GM12878 (cell line): ENCODE measurements at regions of chr3 and their contacts with region 1.

Region 1: GRCh38 chr3:16370872-16371740 is 106.1 kb downstream of the OXNAD1 start:
- DNase-seq: no peak
- ATAC-seq: peak; percentile 41
- H3K4me3 ChIP-seq: peak overlapping the region; percentile 23; the same call in 1 of the 2 replicates
- H3K27ac ChIP-seq: peak overlapping the region; percentile 96
- H3K4me1 ChIP-seq: peaks cover 62% of the 10 kb centered on the region
- H3K27me3 ChIP-seq: no peaks in the 10 kb centered on the region
- CTCF ChIP-seq: no peak
- EP300 ChIP-seq: peak in 1 of 2 experiments; percentile 67; a peak in 3 of 4 replicates
- POLR2A ChIP-seq: no peak
- RAD21 ChIP-seq: no peak

Region 2: GRCh38 chr3:16427103-16427965 is 56.2 kb after region 1 on chr3:
- CTCF ChIA-PET with region 1: interaction called, 8 read pairs
- POLR2A ChIA-PET with region 1: interaction called, 9 read pairs
- RAD21 ChIA-PET with region 1: interaction called, 11 read pairs
- SMC1A ChIA-PET with region 1: interaction called, 19 read pairs
- in situ Hi-C with region 1: no loop called
- intact Hi-C with region 1: loop called (anchors 2 kb)
- DNase-seq: no peak
- ATAC-seq: no peak
- H3K4me3 ChIP-seq: no peak overlapping the region
- H3K27ac ChIP-seq: no peak overlapping the region
- H3K4me1 ChIP-seq: peaks cover 28% of the 10 kb centered on the region
- H3K27me3 ChIP-seq: no peaks in the 10 kb centered on the region
- CTCF ChIP-seq: no peak
- EP300 ChIP-seq: no peak
- POLR2A ChIP-seq: no peak
- RAD21 ChIP-seq: no peak

Region 3: DNA sequence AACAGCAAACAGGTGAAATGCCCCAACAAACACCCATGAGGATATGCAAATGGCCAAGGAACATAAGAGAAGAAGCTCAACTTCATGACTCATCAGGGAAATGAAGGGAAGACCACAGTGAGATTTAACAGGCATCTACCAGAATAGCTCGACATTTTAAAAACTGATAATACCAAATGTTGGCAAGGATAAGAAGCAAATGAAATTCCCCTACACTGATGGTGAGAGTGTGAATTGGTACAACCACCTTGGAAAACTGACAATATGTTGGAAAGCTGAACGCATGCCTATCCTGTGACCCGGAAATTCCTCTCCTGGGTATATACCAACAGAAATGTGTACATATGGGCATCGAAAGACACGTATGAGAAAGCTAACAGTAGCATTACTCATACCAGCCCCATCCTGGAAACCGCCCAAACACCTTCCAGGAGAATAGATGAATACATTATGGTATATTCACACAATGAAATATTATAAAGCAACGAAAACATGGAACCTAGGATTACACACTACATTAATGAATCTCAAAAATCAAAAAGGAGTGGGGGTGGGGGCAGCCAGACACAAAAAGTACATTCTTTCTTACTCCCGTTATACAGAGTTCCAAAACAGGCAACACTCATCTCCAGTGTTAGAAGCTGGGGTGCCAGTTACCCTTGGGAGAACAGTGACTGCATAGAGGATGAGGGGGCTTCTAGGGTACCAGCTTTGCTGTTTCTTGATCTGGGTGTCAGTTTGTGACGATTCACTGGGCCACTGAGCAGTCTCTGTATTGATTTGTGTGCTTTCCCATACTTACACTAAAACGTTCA is 125.5 kb after region 1 on chr3:
- CTCF ChIA-PET with region 1: interaction called, 3 read pairs
- POLR2A ChIA-PET with region 1: interaction called, 6 read pairs
- RAD21 ChIA-PET with region 1: interaction called, 17 read pairs
- SMC1A ChIA-PET with region 1: interaction called, 10 read pairs
- in situ Hi-C with region 1: no loop called
- intact Hi-C with region 1: no loop called
- DNase-seq: peak; percentile 60
- ATAC-seq: peak; percentile 73
- H3K4me3 ChIP-seq: no peak overlapping the region
- H3K27ac ChIP-seq: peak overlapping the region; percentile 29; the same call in 1 of the 2 replicates
- H3K4me1 ChIP-seq: peaks cover 48% of the 10 kb centered on the region
- H3K27me3 ChIP-seq: no peaks in the 10 kb centered on the region
- CTCF ChIP-seq: no peak
- EP300 ChIP-seq: no peak
- POLR2A ChIP-seq: no peak
- RAD21 ChIP-seq: no peak

Region 4: GRCh38 chr3:16504242-16504641 is 133.1 kb after region 1 on chr3:
- CTCF ChIA-PET with region 1: interaction called, 4 read pairs
- POLR2A ChIA-PET with region 1: interaction called, 66 read pairs
- RAD21 ChIA-PET with region 1: interaction called, 52 read pairs
- SMC1A ChIA-PET with region 1: interaction called, 125 read pairs
- in situ Hi-C with region 1: no loop called
- intact Hi-C with region 1: no loop called
- DNase-seq: peak; percentile 96
- ATAC-seq: peak; percentile 73
- H3K4me3 ChIP-seq: no peak overlapping the region
- H3K27ac ChIP-seq: peak overlapping the region; percentile 60
- H3K4me1 ChIP-seq: peaks cover 61% of the 10 kb centered on the region
- H3K27me3 ChIP-seq: no peaks in the 10 kb centered on the region
- CTCF ChIP-seq: no peak
- EP300 ChIP-seq: peak; percentile 91 to 92
- POLR2A ChIP-seq: no peak
- RAD21 ChIP-seq: no peak

Region 5: GRCh38 chr3:16529264-16529663 is 158.2 kb after region 1 on chr3:
- CTCF ChIA-PET with region 1: interaction called, 3 read pairs
- POLR2A ChIA-PET with region 1: no interaction called
- RAD21 ChIA-PET with region 1: no interaction called
- SMC1A ChIA-PET with region 1: interaction called, 12 read pairs
- in situ Hi-C with region 1: no loop called
- intact Hi-C with region 1: no loop called
- DNase-seq: no peak
- ATAC-seq: peak; percentile 72
- H3K4me3 ChIP-seq: no peak overlapping the region
- H3K27ac ChIP-seq: no peak overlapping the region
- H3K4me1 ChIP-seq: no peaks in the 10 kb centered on the region
- H3K27me3 ChIP-seq: no peaks in the 10 kb centered on the region
- CTCF ChIP-seq: peak in 2 of 3 experiments; percentile 22 to 24; a peak in 3 of 6 replicates
- EP300 ChIP-seq: no peak
- POLR2A ChIP-seq: no peak
- RAD21 ChIP-seq: peak; percentile 49

Region 6: GRCh38 chr3:16550676-16551341 is 179.7 kb after region 1 on chr3:
- CTCF ChIA-PET with region 1: interaction called, 7 read pairs
- POLR2A ChIA-PET with region 1: no interaction called
- RAD21 ChIA-PET with region 1: interaction called, 5 read pairs
- SMC1A ChIA-PET with region 1: interaction called, 5 read pairs
- in situ Hi-C with region 1: no loop called
- intact Hi-C with region 1: loop called (anchors 1 kb)
- DNase-seq: peak; percentile 81
- ATAC-seq: peak; percentile 98
- H3K4me3 ChIP-seq: no peak overlapping the region
- H3K27ac ChIP-seq: 0 out of 2 replicates have a peak overlapping the region, but pooled peaks have one; percentile 9
- H3K4me1 ChIP-seq: peaks cover 13% of the 10 kb centered on the region
- H3K27me3 ChIP-seq: no peaks in the 10 kb centered on the region
- CTCF ChIP-seq: peak; percentile 83 to 94 (median 90)
- EP300 ChIP-seq: no peak
- POLR2A ChIP-seq: peak; percentile 25; the same call in 1 of the 2 replicates
- RAD21 ChIP-seq: peak; percentile 100

Region 7: GRCh38 chr3:17742108-17742879 is 1371.2 kb after region 1 on chr3 and contains the start of gene TBC1D5:
- CTCF ChIA-PET with region 1: no interaction called
- POLR2A ChIA-PET with region 1: no interaction called
- RAD21 ChIA-PET with region 1: no interaction called
- SMC1A ChIA-PET with region 1: no interaction called
- in situ Hi-C with region 1: no loop called
- intact Hi-C with region 1: loop called (anchors 5 kb)
- DNase-seq: peak; percentile 91
- ATAC-seq: peak; percentile 82
- H3K4me3 ChIP-seq: peak within 1 kb of the TSS; percentile 94
- H3K27ac ChIP-seq: peak within 1 kb of the TSS; percentile 94
- H3K4me1 ChIP-seq: peaks cover 13% of the 10 kb centered on the region
- H3K27me3 ChIP-seq: no peaks in the 10 kb centered on the region
- CTCF ChIP-seq: peak in 1 of 3 experiments; percentile 6; a peak in 1 of 6 replicates
- EP300 ChIP-seq: no peak
- POLR2A ChIP-seq: peak; percentile 90
- RAD21 ChIP-seq: no peak
- polyA plus RNA-seq, gene TBC1D5: 5.5 to 5.8 TPM